ENCODE measurements at regions of chr2 and their contacts with region 1.

Region 1: DNA sequence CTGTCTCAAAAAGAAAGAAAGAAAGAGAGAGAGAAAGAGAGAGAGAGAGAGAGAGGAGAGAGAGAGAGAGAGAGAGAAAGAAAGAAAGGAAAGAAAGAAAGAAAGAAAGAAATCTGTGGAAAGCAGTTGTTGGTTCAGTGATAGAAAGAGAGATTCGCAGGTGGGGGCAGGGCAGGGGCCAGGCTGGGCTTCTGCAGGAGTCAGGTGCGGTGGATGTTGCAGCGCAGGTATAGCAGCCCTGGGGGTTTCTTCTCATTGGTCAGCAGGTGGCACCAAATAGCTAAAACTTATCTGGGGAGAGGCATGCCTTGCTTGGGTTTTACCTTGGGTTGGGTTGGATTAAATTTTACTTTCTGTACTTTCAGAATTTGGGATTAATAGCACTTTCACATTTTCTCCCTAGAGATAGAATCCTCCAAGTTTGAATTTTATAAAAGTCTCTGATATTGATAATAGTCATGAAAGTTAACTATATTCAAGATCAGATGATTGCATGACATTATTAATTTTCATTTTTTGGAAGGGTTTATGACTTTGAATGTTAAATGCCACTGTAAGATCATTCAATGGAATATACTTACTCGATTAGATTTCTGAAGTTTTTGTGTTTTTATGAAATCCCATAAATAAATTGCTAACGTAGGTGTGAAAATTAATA is 66.6 kb downstream of the SPTBN1 start:
- DNase-seq: peak; percentile 60
- ATAC-seq: peak; percentile 97
- H3K4me3 ChIP-seq: no peak overlapping the region
- H3K27ac ChIP-seq: no peak overlapping the region
- H3K4me1 ChIP-seq: peaks cover 13 to 31% of the 10 kb centered on the region in 2 experiments
- H3K27me3 ChIP-seq: no peaks in the 10 kb centered on the region
- CTCF ChIP-seq: peak; percentile 54 to 69 (median 63)
- POLR2A ChIP-seq: no peak
- RAD21 ChIP-seq: peak; percentile 87

Region 2: GRCh38 chr2:54657664-54658083 is 134.9 kb after region 1 on chr2:
- CTCF ChIA-PET with region 1: interaction called, 3 read pairs
- POLR2A ChIA-PET with region 1: no interaction called
- RAD21 ChIA-PET with region 1: no interaction called
- intact Hi-C with region 1: loop called (anchors 2 kb)
- DNase-seq: peak; percentile 23
- ATAC-seq: peak; percentile 98
- H3K4me3 ChIP-seq: no peak overlapping the region
- H3K27ac ChIP-seq: no peak overlapping the region
- H3K4me1 ChIP-seq: no peaks in the 10 kb centered on the region
- H3K27me3 ChIP-seq: no peaks in the 10 kb centered on the region
- CTCF ChIP-seq: peak; percentile 56 to 70 (median 68); a peak in 5 of 6 replicates
- POLR2A ChIP-seq: no peak
- RAD21 ChIP-seq: peak; percentile 73

Region 3: GRCh38 chr2:54704688-54705605 is 182.2 kb after region 1 on chr2:
- CTCF ChIA-PET with region 1: interaction called, 23 read pairs
- POLR2A ChIA-PET with region 1: no interaction called
- RAD21 ChIA-PET with region 1: interaction called in 1 of 2 experiments, 3 read pairs
- intact Hi-C with region 1: loop called (anchors 1 kb)
- DNase-seq: peak; percentile 42
- ATAC-seq: peak; percentile 82
- H3K4me3 ChIP-seq: no peak overlapping the region
- H3K27ac ChIP-seq: no peak overlapping the region
- H3K4me1 ChIP-seq: no peaks in the 10 kb centered on the region
- H3K27me3 ChIP-seq: no peaks in the 10 kb centered on the region
- CTCF ChIP-seq: peak; percentile 33 to 78 (median 69); a peak in 5 of 6 replicates
- POLR2A ChIP-seq: no peak
- RAD21 ChIP-seq: peak; percentile 84

Region 4: DNA sequence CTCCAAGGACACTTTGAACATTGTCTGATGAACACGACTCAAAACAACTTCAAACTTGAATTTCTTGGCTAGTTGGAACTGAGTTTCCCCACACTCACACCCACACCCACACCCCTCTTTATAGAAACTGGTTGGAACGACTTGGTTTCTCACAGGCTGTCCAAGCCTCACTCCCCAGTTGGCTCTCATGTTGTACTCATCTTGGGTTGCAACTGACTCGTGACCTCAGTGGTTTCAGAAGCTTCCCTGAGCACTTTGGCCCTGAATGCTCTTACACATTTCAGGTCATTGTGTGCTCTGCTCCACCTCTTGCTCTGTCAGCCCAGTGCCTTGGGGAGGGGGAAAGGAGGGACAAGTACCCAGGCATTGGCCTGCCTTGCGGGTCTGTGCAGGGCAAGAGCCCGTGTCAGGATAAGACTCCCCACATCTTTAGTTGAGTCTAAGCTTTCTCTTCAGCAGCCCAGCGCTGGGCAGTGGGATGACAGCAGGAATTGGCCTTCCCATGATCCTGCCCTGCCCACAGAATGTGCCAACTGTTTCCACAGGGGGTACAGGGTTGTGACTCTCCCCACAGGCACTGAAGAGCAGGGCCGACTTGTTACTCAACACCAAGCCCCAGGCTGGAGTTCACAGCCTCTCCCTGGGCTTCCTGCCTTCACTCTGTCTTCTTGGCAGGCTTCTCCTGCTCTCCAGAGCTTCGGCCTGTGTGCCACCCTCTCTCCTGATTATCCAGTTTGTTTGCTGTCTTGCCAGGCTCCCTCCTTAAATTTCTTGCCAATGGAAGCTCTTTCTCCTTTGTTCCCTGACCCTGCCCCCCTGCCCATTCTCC is 422.9 kb after region 1 on chr2:
- CTCF ChIA-PET with region 1: no interaction called
- POLR2A ChIA-PET with region 1: no interaction called
- RAD21 ChIA-PET with region 1: no interaction called
- intact Hi-C with region 1: no loop called
- DNase-seq: no peak
- ATAC-seq: 0 out of 2 replicates have a peak, but pooled peaks have one; percentile 27
- H3K4me3 ChIP-seq: no peak overlapping the region
- H3K27ac ChIP-seq: no peak overlapping the region
- H3K4me1 ChIP-seq: peaks cover 0 to 11% of the 10 kb centered on the region in 2 experiments; a peak in 2 of 4 replicates
- H3K27me3 ChIP-seq: no peaks in the 10 kb centered on the region
- CTCF ChIP-seq: no peak
- POLR2A ChIP-seq: no peak
- RAD21 ChIP-seq: no peak

Region 5: GRCh38 chr2:55175254-55176025 is 652.7 kb after region 1 on chr2:
- CTCF ChIA-PET with region 1: no interaction called
- POLR2A ChIA-PET with region 1: no interaction called
- RAD21 ChIA-PET with region 1: no interaction called
- intact Hi-C with region 1: loop called (anchors 10 kb)
- DNase-seq: peak; percentile 37
- ATAC-seq: peak; percentile 81
- H3K4me3 ChIP-seq: no peak overlapping the region
- H3K27ac ChIP-seq: no peak overlapping the region
- H3K4me1 ChIP-seq: no peaks in the 10 kb centered on the region; a peak in 1 of 4 replicates
- H3K27me3 ChIP-seq: no peaks in the 10 kb centered on the region
- CTCF ChIP-seq: peak; percentile 34 to 69 (median 66); a peak in 4 of 6 replicates
- POLR2A ChIP-seq: no peak
- RAD21 ChIP-seq: peak; percentile 90